BJ (cell line): ENCODE measurements at regions of chr2 and their contacts with region 1.

Region 1: GRCh38 chr2:85015653-85016360 is 44.8 kb downstream of the KCMF1 start:
- DNase-seq: no peak
- H3K4me3 ChIP-seq: no peak overlapping the region
- H3K27me3 ChIP-seq: no peaks in the 10 kb centered on the region
- CTCF ChIP-seq: no peak; the same call in 1 of the 2 replicates

Region 2: DNA sequence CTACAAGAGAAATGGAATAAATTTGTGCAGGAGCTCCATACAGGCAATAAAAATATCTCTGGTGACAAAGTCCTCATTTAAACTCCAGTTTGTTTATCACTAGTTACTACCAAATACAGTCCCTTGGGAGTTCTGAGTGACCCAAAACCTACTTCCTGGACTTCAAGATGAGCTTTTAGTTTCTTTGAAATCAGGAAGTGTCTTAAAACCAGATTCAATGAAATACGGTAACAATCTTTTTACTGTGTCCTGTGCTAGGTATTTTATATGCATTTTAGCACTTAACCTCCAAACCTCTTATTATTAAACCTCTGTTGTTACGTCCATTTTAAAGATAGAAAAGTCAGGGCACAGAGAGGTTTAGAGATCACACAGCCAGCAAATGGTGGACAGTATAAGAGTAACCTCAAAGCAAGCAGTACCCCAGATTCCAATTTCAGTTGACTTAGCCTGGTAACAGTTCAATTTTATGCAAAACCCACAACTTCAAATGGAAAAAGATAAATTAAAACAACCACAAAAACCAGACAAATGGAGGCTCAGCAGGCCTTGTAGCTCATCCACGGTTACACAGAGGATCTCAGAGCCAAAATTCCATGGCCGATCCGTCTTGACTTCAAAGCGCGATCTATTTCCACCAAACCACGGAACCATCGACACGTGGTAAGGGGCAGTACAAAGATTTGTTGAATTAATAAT is 46.1 kb before region 1 on chr2:
- CTCF ChIA-PET with region 1: interaction called, 4 read pairs
- POLR2A ChIA-PET with region 1: interaction called, 16 read pairs
- DNase-seq: no peak
- H3K4me3 ChIP-seq: peak overlapping the region; percentile 53
- H3K27me3 ChIP-seq: no peaks in the 10 kb centered on the region
- CTCF ChIP-seq: no peak

Region 3: DNA sequence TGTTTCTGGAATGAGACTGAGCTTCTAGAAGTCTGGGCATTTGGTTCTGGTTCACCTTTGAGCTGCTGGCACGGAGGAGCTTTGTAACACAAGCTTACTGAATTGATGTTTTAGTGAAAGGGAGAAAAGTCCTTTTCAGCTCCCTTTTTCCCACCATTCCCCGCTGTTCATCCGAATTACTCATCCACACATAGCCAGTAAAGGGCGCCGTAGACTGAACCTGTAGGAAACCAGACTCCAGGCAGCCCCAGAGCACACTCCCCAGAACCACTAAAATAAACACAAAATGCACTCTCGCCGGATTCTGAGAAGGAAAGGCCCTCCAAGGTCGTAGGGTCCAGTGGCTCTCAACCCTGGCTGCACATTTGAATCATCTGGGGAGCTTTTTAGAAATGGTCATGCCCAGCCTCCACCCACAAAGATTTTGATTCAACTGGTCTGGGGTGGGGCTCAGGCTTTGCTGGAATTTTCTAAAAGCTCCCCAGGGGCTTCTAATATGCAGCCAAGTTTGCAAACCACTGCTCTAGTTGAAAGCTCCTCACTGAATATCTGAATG is 147.0 kb after region 1 on chr2:
- CTCF ChIA-PET with region 1: no interaction called
- POLR2A ChIA-PET with region 1: no interaction called
- DNase-seq: no peak
- H3K4me3 ChIP-seq: no peak overlapping the region
- H3K27me3 ChIP-seq: no peaks in the 10 kb centered on the region
- CTCF ChIP-seq: no peak